ENCODE measurements at regions of chr4 and their contacts with region 1.

Region 1: DNA sequence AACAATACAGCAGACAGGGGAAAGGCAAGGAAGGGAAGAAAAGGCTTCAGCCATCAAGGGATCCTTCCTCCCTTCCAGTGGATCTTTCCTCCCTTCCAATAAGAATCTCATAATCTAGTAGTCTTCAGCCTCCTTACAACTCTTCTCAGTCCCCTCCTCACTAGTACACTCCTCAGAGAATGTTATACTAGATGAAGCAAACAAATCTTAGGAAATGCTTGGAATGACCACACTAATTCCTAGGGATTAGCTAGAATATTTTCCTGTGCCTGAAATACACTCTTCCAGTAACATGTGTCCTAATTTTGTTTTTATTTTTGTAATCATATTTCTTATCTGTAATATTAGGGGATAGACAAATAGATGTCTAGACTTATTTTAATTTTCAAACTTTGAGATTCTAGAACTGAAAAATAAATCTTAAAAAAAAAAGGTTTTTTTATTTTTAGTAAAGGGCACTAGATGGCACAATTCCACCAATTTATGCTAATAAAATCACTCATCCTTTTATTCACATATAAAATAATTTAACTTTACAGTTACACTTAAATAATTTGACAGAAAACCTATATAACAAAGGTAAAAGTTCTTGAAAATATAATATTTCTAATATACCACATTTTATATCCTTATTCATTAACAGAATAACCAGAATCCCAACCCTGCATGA is 7.0 kb upstream of the STPG2 start:
- DNase-seq: peak in 1 of 2 donors; percentile 33
- ATAC-seq: no peak
- H3K4me3 ChIP-seq: no peak overlapping the region
- H3K4me3 Mint-ChIP-seq: no peak overlapping the region
- H3K27ac ChIP-seq: no peak overlapping the region
- H3K27ac Mint-ChIP-seq: no peak overlapping the region
- H3K4me1 ChIP-seq: no peaks in the 10 kb centered on the region
- H3K4me1 Mint-ChIP-seq: peaks cover 0 to 9% of the 10 kb centered on the region in 2 donors
- H3K27me3 ChIP-seq: no peaks in the 10 kb centered on the region
- H3K27me3 Mint-ChIP-seq: no peaks in the 10 kb centered on the region
- CTCF ChIP-seq: peak; percentile 51

Region 2: GRCh38 chr4:98113012-98113411 is 37.2 kb before region 1 on chr4:
- intact Hi-C with region 1: no loop called
- DNase-seq: peak in 1 of 2 donors; percentile 36
- ATAC-seq: no peak
- H3K4me3 ChIP-seq: no peak overlapping the region
- H3K4me3 Mint-ChIP-seq: no peak overlapping the region
- H3K27ac ChIP-seq: no peak overlapping the region
- H3K27ac Mint-ChIP-seq: no peak overlapping the region
- H3K4me1 ChIP-seq: no peaks in the 10 kb centered on the region
- H3K4me1 Mint-ChIP-seq: no peaks in the 10 kb centered on the region
- H3K27me3 ChIP-seq: no peaks in the 10 kb centered on the region
- H3K27me3 Mint-ChIP-seq: peaks cover 5 to 12% of the 10 kb centered on the region in 2 donors
- CTCF ChIP-seq: no peak

Region 3: DNA sequence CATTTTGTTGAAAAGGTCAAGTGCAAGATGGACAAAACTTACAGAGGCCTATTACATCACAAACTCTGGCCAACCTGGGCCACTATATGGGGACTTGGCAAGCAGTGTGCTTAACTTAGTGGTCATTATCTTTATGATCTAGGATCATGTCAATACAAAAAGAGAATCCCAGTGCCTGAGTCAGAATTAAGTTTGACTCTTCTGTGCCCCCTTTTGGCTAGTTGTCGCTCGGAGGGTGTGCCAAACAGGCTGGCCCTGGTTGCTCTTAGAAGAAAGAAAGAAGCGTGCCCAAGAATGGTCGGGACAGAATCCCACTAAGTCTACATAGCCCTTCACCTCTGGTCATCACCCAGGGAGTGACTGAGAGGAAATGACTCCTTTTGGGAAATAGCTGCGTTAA is 678.6 kb after region 1 on chr4:
- intact Hi-C with region 1: loop called (anchors 10 kb)
- DNase-seq: peak in 1 of 2 donors; percentile 58
- ATAC-seq: peak in 2 of 3 donors; percentile 43 to 46
- H3K4me3 ChIP-seq: no peak overlapping the region
- H3K4me3 Mint-ChIP-seq: no peak overlapping the region
- H3K27ac ChIP-seq: no peak overlapping the region
- H3K27ac Mint-ChIP-seq: no peak overlapping the region
- H3K4me1 ChIP-seq: no peaks in the 10 kb centered on the region
- H3K4me1 Mint-ChIP-seq: peaks cover 0 to 10% of the 10 kb centered on the region in 2 donors
- H3K27me3 ChIP-seq: no peaks in the 10 kb centered on the region
- H3K27me3 Mint-ChIP-seq: peaks cover 0 to 13% of the 10 kb centered on the region in 2 donors
- CTCF ChIP-seq: no peak

Region 4: GRCh38 chr4:99054428-99054994 is 904.3 kb after region 1 on chr4:
- intact Hi-C with region 1: loop called (anchors 2 kb)
- DNase-seq: no peak
- ATAC-seq: no peak
- H3K4me3 ChIP-seq: no peak overlapping the region
- H3K4me3 Mint-ChIP-seq: no peak overlapping the region
- H3K27ac ChIP-seq: no peak overlapping the region
- H3K27ac Mint-ChIP-seq: peak overlapping the region in 1 of 2 donors; percentile 47
- H3K4me1 ChIP-seq: no peaks in the 10 kb centered on the region
- H3K4me1 Mint-ChIP-seq: peaks cover 9 to 18% of the 10 kb centered on the region in 2 donors
- H3K27me3 ChIP-seq: no peaks in the 10 kb centered on the region
- H3K27me3 Mint-ChIP-seq: no peaks in the 10 kb centered on the region
- CTCF ChIP-seq: no peak

Region 5: DNA sequence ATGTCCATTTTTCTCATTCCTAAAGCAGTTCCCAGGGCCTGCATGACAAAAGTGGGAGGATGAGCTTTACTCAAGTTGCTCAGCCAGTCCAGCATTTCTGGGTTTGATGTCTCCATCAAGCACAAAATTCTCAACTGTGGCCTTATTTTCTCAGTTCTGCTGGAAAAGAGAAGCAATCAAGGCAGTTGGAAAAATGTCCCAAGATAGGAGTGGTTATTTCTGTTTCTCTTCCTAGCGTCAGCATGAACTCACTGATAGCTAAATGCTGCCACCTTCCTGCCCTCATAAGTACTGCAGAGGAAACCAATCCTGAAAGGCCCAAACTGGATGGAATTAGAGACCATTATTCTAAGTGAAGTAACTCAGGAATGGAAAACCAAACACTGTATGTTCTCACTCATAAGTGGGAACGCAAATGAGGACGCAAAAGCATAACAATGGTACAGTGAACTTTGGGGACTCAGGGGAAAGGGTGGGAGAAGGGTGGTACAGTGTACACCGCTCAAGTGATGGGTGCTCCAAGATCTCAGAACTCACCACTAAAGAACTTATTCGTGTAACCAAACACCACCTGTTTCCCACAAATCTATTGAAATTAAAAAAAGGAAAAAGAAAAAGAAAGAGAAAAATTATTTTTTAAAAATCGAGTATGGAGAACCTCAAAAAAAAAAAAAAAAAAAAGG is 1255.3 kb after region 1 on chr4:
- intact Hi-C with region 1: loop called (anchors 5 kb)
- DNase-seq: peak; percentile 32 to 78
- ATAC-seq: peak; percentile 76 to 92 (median 82)
- H3K4me3 ChIP-seq: no peak overlapping the region
- H3K4me3 Mint-ChIP-seq: no peak overlapping the region
- H3K27ac ChIP-seq: no peak overlapping the region
- H3K27ac Mint-ChIP-seq: no peak overlapping the region
- H3K4me1 ChIP-seq: peaks cover 2% of the 10 kb centered on the region
- H3K4me1 Mint-ChIP-seq: peaks cover 0 to 4% of the 10 kb centered on the region in 2 donors
- H3K27me3 ChIP-seq: no peaks in the 10 kb centered on the region
- H3K27me3 Mint-ChIP-seq: peaks cover 0 to 6% of the 10 kb centered on the region in 2 donors
- CTCF ChIP-seq: peak; percentile 92